ENCODE measurements at regions of chr11 and their contacts with region 1.

Region 1: GRCh38 chr11:107549253-107549953 is 16.1 kb downstream of the ALKBH8 start:
- DNase-seq: peak; percentile 27
- H3K4me3 ChIP-seq: no peak overlapping the region
- H3K27ac ChIP-seq: no peak overlapping the region
- H3K4me1 ChIP-seq: peaks cover 16% of the 10 kb centered on the region
- H3K27me3 ChIP-seq: no peaks in the 10 kb centered on the region
- CTCF ChIP-seq: peak; percentile 84 to 85

Region 2: DNA sequence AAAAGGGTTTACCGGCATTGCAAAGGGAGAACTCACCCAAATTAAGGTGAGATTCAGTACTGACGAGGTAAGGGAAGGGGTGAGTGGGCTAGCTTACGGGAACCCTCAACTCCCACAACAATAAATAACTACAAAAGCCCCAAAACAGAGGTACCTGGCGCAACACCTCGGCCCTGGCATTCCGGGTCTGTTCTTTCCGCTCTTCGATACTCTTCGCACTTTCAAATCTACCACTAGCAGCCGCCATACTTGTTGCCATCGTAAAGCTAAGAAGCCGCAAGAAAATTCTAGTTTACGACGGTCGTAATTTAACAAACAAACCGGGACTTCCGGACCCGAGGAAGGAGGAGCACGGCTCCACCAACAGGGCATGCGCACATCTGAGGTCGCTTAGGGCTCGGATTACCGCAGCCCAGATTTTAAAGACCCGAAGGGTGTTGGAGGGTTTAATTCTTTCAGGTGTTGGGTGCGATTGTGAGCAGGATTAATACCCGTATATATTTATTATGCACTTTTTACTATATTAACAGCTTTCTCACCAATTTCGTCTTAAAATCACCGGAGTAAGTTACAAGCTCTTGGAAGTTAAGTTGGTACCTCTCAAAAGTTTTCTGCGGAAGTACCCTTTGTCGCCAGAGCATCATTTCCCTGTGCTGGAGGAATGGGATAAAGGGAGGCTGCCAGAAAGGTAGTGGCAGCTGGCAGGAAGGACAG is 91.7 kb before region 1 on chr11 and contains the start of gene CWF19L2:
- CTCF ChIA-PET with region 1: no interaction called
- dilution Hi-C with region 1: no loop called
- in situ Hi-C with region 1: no loop called
- intact Hi-C with region 1: loop called (anchors 5 kb)
- DNase-seq: peak; percentile 89
- H3K4me3 ChIP-seq: peak within 1 kb of the TSS; percentile 49 to 70 (median 61)
- H3K27ac ChIP-seq: peak within 1 kb of the TSS; percentile 40
- H3K4me1 ChIP-seq: no peaks in the 10 kb centered on the region
- H3K27me3 ChIP-seq: no peaks in the 10 kb centered on the region
- CTCF ChIP-seq: no peak
- total RNA-seq, gene CWF19L2: 9.0 to 10.5 TPM

Region 3: GRCh38 chr11:107526197-107526596 is 23.2 kb before region 1 on chr11:
- CTCF ChIA-PET with region 1: no interaction called
- dilution Hi-C with region 1: no loop called
- in situ Hi-C with region 1: no loop called
- intact Hi-C with region 1: no loop called
- DNase-seq: no peak
- H3K4me3 ChIP-seq: no peak overlapping the region
- H3K27ac ChIP-seq: no peak overlapping the region
- H3K4me1 ChIP-seq: no peaks in the 10 kb centered on the region
- H3K27me3 ChIP-seq: no peaks in the 10 kb centered on the region
- CTCF ChIP-seq: no peak

Region 4: DNA sequence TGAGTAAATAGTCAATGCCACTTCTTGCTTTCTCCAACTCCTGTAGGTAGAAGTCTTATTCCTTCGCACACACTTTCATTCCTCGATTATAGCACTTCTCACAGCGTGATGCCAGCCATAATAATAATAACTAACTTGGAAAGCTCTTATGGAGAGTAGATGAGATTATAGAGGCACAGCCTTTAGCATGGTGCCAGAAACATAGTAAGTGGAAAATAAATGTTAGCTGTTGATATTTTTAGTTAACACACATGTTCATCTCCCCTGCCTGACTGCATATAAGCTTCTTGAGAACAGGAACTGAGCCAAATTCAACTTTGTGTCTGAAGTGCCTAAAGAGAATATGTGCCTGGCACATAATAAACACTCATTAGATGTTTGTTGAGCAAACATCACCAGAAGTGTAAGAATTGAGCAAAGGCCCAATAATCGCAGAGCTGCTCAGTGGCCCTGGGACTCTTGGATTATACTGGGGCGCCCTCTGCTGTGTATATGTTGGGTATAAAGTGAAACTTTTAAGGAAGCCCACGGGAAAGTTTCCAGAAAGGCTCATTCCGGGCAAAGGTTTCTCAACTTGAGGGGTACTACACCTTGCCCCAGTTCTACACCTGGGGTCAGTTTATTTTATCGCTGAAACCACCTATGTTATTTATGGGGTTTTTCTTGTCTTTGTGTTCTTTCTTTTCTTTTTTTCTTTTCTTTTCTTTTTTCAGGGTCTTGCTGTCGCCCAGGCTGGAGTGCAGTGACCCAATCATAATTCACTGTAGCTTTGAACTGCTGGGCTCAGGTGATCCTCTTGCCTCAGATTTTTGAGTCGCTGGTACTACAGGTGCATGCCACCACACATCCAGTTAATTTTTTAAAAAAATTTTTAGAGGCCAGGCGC is 140.2 kb after region 1 on chr11:
- CTCF ChIA-PET with region 1: interaction called, 3 read pairs
- dilution Hi-C with region 1: no loop called
- in situ Hi-C with region 1: no loop called
- intact Hi-C with region 1: loop called (anchors 1 kb)
- DNase-seq: peak; percentile 34
- H3K4me3 ChIP-seq: no peak overlapping the region
- H3K27ac ChIP-seq: no peak overlapping the region
- H3K4me1 ChIP-seq: no peaks in the 10 kb centered on the region
- H3K27me3 ChIP-seq: no peaks in the 10 kb centered on the region
- CTCF ChIP-seq: peak; percentile 28 to 72

Region 5: GRCh38 chr11:107770551-107770951 is 221.1 kb after region 1 on chr11:
- CTCF ChIA-PET with region 1: no interaction called
- dilution Hi-C with region 1: no loop called
- in situ Hi-C with region 1: no loop called
- intact Hi-C with region 1: loop called (anchors 1 kb)
- DNase-seq: no peak
- H3K4me3 ChIP-seq: no peak overlapping the region
- H3K27ac ChIP-seq: no peak overlapping the region
- H3K4me1 ChIP-seq: no peaks in the 10 kb centered on the region
- H3K27me3 ChIP-seq: no peaks in the 10 kb centered on the region
- CTCF ChIP-seq: no peak

Measured in mammary epithelial cell (primary cell).